ENCODE measurements at regions of chr15 and their contacts with region 1.

Region 1: GRCh38 chr15:52528991-52529926 is 579 bp upstream of the MYO5A start:
- DNase-seq: peak; percentile 76
- H3K4me3 ChIP-seq: peak overlapping the region; percentile 51 to 87 (median 74)
- H3K27ac ChIP-seq: peak overlapping the region; percentile 60
- H3K4me1 ChIP-seq: peaks cover 14% of the 10 kb centered on the region
- H3K27me3 ChIP-seq: no peaks in the 10 kb centered on the region
- CTCF ChIP-seq: no peak

Region 2: GRCh38 chr15:52331490-52332240 is 197.6 kb before region 1 on chr15:
- CTCF ChIA-PET with region 1: no interaction called
- dilution Hi-C with region 1: no loop called
- in situ Hi-C with region 1: no loop called
- intact Hi-C with region 1: loop called (anchors 2 kb)
- DNase-seq: peak; percentile 75
- H3K4me3 ChIP-seq: no peak overlapping the region
- H3K27ac ChIP-seq: no peak overlapping the region
- H3K4me1 ChIP-seq: peaks cover 25% of the 10 kb centered on the region
- H3K27me3 ChIP-seq: no peaks in the 10 kb centered on the region
- CTCF ChIP-seq: peak; percentile 65 to 66

Region 3: DNA sequence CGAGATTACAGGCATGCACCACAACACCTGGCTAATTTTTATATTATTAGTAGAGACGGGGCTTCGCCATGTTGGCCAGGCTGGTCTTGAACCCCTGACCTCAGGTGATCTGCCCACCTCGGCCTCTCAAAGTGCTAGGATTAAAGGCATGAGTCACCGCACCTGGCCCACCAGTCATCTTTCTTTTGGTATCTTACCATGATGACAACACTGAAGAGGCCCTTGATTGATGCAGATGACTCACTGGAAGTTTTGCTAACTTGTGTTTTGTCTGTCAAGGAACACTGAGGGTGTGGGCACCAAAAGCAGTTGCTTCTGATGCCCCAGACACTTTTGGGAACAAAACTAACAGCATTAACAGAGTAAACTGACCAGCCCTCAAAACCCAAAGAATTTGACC is 88.9 kb before region 1 on chr15:
- CTCF ChIA-PET with region 1: no interaction called
- dilution Hi-C with region 1: no loop called
- in situ Hi-C with region 1: no loop called
- intact Hi-C with region 1: loop called (anchors 5 kb)
- DNase-seq: peak; percentile 86
- H3K4me3 ChIP-seq: no peak overlapping the region
- H3K27ac ChIP-seq: no peak overlapping the region
- H3K4me1 ChIP-seq: peaks cover 12% of the 10 kb centered on the region
- H3K27me3 ChIP-seq: no peaks in the 10 kb centered on the region
- CTCF ChIP-seq: no peak

Region 4: GRCh38 chr15:52481915-52482314 is 47.3 kb before region 1 on chr15:
- CTCF ChIA-PET with region 1: no interaction called
- dilution Hi-C with region 1: no loop called
- in situ Hi-C with region 1: no loop called
- intact Hi-C with region 1: loop called (anchors 5 kb)
- DNase-seq: peak; percentile 76
- H3K4me3 ChIP-seq: no peak overlapping the region
- H3K27ac ChIP-seq: peak overlapping the region; percentile 44
- H3K4me1 ChIP-seq: peaks cover 39% of the 10 kb centered on the region
- H3K27me3 ChIP-seq: no peaks in the 10 kb centered on the region
- CTCF ChIP-seq: no peak

Region 5: GRCh38 chr15:52568601-52569256 is 39.5 kb after region 1 on chr15 and contains the start of gene ARPP19:
- CTCF ChIA-PET with region 1: no interaction called
- dilution Hi-C with region 1: no loop called
- in situ Hi-C with region 1: no loop called
- intact Hi-C with region 1: no loop called
- DNase-seq: peak; percentile 93
- H3K4me3 ChIP-seq: peak within 1 kb of the TSS; percentile 71 to 76 (median 74)
- H3K27ac ChIP-seq: peak within 1 kb of the TSS; percentile 93
- H3K4me1 ChIP-seq: peaks cover 5% of the 10 kb centered on the region
- H3K27me3 ChIP-seq: no peaks in the 10 kb centered on the region
- CTCF ChIP-seq: peak in 1 of 2 donors; percentile 31
- total RNA-seq, gene ARPP19: 153 to 200 TPM

Region 6: DNA sequence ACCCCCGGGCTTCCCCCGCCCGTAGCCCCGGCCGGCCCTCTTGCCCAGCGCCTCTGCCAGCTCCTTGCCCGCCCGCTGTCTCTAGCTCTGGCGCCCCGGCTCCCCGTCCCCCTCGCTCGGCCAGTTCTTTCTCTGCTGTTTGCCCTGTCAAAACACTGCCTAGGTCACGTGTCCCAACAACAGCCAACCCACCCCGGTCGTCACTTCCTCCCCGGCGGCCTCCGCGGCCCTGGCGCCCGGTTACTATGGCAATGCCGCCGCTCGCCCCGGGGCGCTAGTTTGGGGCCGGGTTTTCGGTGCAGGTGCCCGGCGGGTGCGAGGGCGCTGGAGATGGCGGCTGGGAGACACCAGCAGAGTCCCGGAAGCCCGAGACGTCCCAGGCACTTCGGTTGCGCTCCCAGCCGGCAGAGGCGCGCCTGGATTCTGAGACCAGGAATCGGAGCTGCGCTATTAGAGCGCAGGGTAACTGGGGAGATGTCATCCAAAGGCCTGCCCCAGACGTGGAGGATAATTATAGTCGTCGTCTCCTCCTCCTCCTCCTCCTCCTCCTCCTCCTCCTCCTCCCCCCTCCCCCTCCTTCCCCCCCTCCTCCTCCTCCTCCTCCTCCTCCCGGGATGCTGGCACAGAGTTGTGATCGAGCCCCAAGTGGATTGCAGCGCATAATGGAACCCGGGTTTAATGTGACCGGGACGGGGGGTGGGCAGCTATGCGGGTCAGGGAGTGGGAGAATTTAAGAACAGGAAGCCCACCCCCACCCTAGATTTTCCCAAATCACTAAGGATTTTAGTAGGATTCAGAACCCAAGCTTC is 150.2 kb after region 1 on chr15 and contains the start of gene ATOSA:
- CTCF ChIA-PET with region 1: no interaction called
- dilution Hi-C with region 1: no loop called
- in situ Hi-C with region 1: no loop called
- intact Hi-C with region 1: loop called (anchors 1 kb)
- DNase-seq: peak; percentile 88
- H3K4me3 ChIP-seq: peak within 1 kb of the TSS; percentile 67 to 99 (median 95)
- H3K27ac ChIP-seq: peak within 1 kb of the TSS; percentile 83
- H3K4me1 ChIP-seq: peaks cover 4% of the 10 kb centered on the region
- H3K27me3 ChIP-seq: no peaks in the 10 kb centered on the region
- CTCF ChIP-seq: peak in 1 of 2 donors; percentile 18
- total RNA-seq, gene ATOSA: 14.4 to 25.3 TPM

Measured in mammary epithelial cell (primary cell).